Endothelial cell of umbilical vein (primary cell): ENCODE measurements at regions of chr20 and their contacts with region 1.

Region 1: GRCh38 chr20:23340524-23340923 is 10.1 kb upstream of the NXT1 start:
- DNase-seq: peak; percentile 84
- H3K4me3 ChIP-seq: no peak overlapping the region
- H3K27ac ChIP-seq: no peak overlapping the region
- H3K4me1 ChIP-seq: no peaks in the 10 kb centered on the region
- H3K27me3 ChIP-seq: peaks cover 2 to 3% of the 10 kb centered on the region in 2 experiments
- CTCF ChIP-seq: peak; percentile 64 to 71
- POLR2A ChIP-seq: no peak

Region 2: DNA sequence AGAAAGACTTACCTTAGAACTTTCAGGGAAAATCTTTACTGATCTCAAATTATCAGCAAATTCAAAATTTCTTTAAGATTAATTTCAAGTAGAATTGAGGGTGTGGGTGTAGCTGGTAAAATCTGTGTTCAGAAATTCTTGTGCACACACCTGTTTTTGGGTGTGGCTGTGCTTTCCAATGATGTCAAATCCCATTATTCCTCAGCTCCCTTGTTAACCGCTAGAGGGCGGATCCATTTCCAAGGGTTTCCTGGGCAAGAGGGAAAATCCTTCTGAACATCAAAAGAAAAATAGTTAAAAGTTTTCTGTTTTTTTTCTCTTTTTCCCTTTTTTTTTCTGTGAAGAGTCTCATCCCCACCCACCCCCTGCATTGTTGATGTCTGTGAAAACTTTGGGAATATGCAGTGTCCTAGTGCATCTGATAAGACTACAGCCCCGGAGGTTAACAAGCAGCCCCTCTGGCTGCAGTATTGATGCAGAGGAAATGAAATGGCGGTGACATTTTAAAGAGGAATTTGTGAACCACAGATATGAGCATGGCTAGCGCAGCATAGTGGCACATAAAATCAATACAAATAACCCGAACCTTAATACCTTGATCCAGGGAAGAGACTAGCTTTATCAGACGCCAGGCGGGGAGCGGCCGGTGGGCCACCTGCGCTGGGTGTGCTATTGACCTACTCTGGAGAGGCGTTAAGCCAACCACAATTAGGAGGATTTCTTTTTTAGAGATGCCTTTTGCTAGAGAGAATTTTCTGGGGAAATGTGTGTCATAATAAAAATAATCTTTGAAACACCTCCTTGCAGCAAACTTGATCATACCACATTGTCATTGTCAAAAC is 887.1 kb before region 1 on chr20:
- CTCF ChIA-PET with region 1: interaction called, 14 read pairs
- POLR2A ChIA-PET with region 1: no interaction called
- dilution Hi-C with region 1: no loop called
- intact Hi-C with region 1: no loop called
- DNase-seq: peak; percentile 11
- H3K4me3 ChIP-seq: no peak overlapping the region
- H3K27ac ChIP-seq: no peak overlapping the region
- H3K4me1 ChIP-seq: no peaks in the 10 kb centered on the region
- H3K27me3 ChIP-seq: peaks cover 0 to 2% of the 10 kb centered on the region in 2 experiments
- CTCF ChIP-seq: peak; percentile 55 to 64
- POLR2A ChIP-seq: no peak

Region 3: GRCh38 chr20:22723648-22724047 is 616.9 kb before region 1 on chr20:
- CTCF ChIA-PET with region 1: interaction called, 20 read pairs
- POLR2A ChIA-PET with region 1: no interaction called
- dilution Hi-C with region 1: no loop called
- intact Hi-C with region 1: no loop called
- DNase-seq: no peak
- H3K4me3 ChIP-seq: no peak overlapping the region
- H3K27ac ChIP-seq: no peak overlapping the region
- H3K4me1 ChIP-seq: peaks cover 12% of the 10 kb centered on the region
- H3K27me3 ChIP-seq: no peaks in the 10 kb centered on the region
- CTCF ChIP-seq: no peak
- POLR2A ChIP-seq: no peak

Region 4: DNA sequence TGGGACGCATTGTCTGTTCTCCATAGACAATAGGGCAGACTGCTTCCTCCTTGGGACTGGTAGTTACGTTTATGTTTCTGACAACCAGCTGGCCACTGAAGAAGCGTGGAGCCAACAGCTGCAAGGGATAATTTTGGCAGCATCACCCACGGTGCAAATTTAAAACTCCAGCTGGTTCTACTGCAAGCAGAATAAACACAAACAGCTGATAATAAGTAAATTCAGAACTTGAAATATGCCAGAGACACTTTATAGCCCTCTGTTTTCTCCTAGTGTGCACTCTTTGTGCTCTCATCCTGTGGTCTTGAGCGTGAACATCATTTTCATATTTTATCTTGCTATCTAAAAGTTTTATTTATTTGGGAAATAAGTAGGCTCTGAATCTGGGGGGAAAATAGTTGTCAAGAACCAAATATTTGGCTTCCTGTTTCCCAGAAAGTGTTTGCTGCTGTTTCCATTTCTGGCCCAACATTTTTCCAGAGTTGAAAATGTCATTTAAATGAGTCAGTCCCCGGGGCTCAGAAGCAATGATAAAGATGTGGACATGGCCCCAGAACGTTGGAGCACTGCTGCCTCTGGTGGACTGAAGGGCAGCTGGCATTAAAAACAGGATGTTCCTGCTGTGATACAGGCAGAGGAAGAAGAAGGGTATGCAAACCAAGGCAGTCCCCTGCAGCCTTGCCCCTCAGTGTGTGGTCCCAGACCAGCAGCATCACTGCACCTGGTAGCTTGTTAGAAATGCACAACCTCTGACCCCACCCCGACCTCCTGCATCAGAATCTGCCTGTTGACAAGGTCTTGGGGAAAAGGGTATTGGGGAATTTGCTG is 278.6 kb before region 1 on chr20:
- CTCF ChIA-PET with region 1: interaction called, 22 read pairs
- POLR2A ChIA-PET with region 1: no interaction called
- dilution Hi-C with region 1: no loop called
- intact Hi-C with region 1: no loop called
- DNase-seq: peak; percentile 92
- H3K4me3 ChIP-seq: no peak overlapping the region
- H3K27ac ChIP-seq: peak overlapping the region; percentile 74
- H3K4me1 ChIP-seq: peaks cover 29% of the 10 kb centered on the region
- H3K27me3 ChIP-seq: no peaks in the 10 kb centered on the region
- CTCF ChIP-seq: peak; percentile 57 to 69
- POLR2A ChIP-seq: no peak

Region 5: GRCh38 chr20:23245553-23246181 is 94.9 kb before region 1 on chr20:
- CTCF ChIA-PET with region 1: interaction called, 53 read pairs
- POLR2A ChIA-PET with region 1: no interaction called
- dilution Hi-C with region 1: no loop called
- intact Hi-C with region 1: loop called (anchors 1 kb)
- DNase-seq: peak; percentile 77
- H3K4me3 ChIP-seq: no peak overlapping the region
- H3K27ac ChIP-seq: no peak overlapping the region
- H3K4me1 ChIP-seq: no peaks in the 10 kb centered on the region
- H3K27me3 ChIP-seq: no peaks in the 10 kb centered on the region
- CTCF ChIP-seq: peak; percentile 67 to 88
- POLR2A ChIP-seq: no peak